Activated naive CD4-positive, alpha-beta T cell treated with anti-CD3 and anti-CD28 coated beads, Interleukin-2, amount 10 ng/mL, durations not matched to agents 7 days and 5 days (primary cell): ENCODE measurements at regions of chr7 and their contacts with region 1.

Region 1: GRCh38 chr7:116984917-116985316 is 31.6 kb downstream of the ST7 start:
- DNase-seq: no peak
- H3K4me3 Mint-ChIP-seq: no peak overlapping the region
- H3K27ac Mint-ChIP-seq: no peak overlapping the region
- H3K4me1 Mint-ChIP-seq: no peaks in the 10 kb centered on the region
- H3K27me3 Mint-ChIP-seq: peaks cover 9% of the 10 kb centered on the region

Region 2: DNA sequence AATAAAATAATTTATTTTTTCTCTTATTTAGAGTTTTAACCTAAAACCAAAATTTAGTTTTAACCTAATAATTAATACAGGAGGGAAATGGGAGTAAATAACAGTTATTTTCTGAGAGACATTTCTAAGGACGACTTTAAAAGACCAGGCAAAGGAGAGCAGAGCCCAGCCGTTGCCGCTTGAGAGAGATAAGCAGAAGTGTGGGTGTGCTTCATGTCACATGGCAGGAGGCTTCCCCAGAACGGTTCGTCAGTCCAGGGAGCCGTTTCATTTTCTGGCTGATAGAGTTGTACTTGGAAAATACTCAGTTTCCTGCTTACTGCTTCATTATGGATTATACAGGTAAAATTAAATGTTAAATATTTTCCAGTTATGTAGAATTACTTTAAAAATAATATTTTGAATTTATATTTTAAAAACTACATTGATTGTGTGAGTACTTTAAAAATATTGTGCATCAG is 29.8 kb after region 1 on chr7:
- CTCF ChIA-PET with region 1: interaction called, 91 read pairs
- DNase-seq: peak; percentile 21
- H3K4me3 Mint-ChIP-seq: no peak overlapping the region
- H3K27ac Mint-ChIP-seq: no peak overlapping the region
- H3K4me1 Mint-ChIP-seq: peaks cover 33% of the 10 kb centered on the region
- H3K27me3 Mint-ChIP-seq: peaks cover 12% of the 10 kb centered on the region

Region 3: DNA sequence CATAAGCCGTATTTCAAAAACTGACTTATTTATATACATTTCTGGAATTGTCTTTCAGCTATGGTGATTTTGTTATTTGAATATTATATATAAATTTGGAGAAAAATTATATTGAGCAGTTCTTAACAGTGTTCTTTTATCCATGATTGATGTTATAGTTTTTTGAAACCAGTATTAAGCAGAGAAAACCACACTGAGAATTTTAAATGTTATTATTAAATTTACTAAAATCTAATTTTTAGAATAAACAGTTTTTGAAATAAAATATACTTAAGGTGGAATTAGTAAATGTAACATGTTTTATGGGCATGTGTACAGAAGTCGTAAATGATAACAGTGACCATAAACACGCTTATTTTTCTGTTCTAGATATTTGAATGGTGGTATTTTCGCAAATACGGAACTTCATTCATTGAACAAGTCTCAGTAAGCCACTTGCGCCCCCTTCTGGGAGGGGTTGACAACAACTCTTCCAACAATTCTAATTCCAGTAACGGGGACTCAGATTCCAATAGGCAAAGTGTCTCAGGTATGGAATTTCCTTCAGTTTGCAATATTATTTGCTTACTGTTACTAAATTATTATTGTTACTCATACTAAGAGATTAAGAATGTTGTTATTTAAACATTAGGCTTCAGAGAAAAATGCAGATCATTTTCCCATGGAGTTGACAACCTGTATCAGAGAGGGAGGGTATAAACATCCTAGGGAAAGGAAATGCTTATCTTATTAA is 134.4 kb after region 1 on chr7:
- CTCF ChIA-PET with region 1: interaction called, 103 read pairs
- DNase-seq: peak; percentile 85
- H3K4me3 Mint-ChIP-seq: no peak overlapping the region
- H3K27ac Mint-ChIP-seq: no peak overlapping the region
- H3K4me1 Mint-ChIP-seq: no peaks in the 10 kb centered on the region
- H3K27me3 Mint-ChIP-seq: peaks cover 5% of the 10 kb centered on the region

Region 4: GRCh38 chr7:117127585-117128168 is 142.8 kb after region 1 on chr7:
- CTCF ChIA-PET with region 1: interaction called, 103 read pairs
- DNase-seq: peak; percentile 68
- H3K4me3 Mint-ChIP-seq: no peak overlapping the region
- H3K27ac Mint-ChIP-seq: no peak overlapping the region
- H3K4me1 Mint-ChIP-seq: no peaks in the 10 kb centered on the region
- H3K27me3 Mint-ChIP-seq: peaks cover 3% of the 10 kb centered on the region